Activated CD4-positive, alpha-beta T cell treated with anti-CD3 and anti-CD28 coated beads for 36 hours (primary cell): ENCODE measurements at regions of chr20 and their contacts with region 1.

Region 1: DNA sequence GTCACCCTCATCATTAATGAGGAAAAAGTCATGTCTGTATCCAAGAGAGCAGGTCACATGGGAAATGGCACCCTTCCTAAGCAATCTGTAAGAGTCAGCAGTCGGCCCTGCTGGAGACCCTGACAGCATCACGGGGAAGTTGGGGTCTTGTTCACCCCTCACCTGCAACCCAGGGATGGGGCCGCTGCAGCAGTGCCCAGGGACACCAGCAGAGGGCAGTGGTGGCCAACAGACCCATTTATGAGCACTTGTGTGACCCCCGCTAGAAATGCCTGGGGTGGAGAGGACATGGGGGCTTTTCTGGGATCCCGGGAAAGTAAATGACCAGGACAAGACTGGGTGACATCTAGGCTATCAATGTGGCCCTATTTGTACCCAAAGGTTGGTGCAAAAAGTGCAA is 35.9 kb downstream of the ANKRD60 start:
- DNase-seq: peak; percentile 64
- ATAC-seq: no peak
- H3K4me3 Mint-ChIP-seq: no peak overlapping the region
- H3K27ac Mint-ChIP-seq: no peak overlapping the region
- H3K4me1 Mint-ChIP-seq: no peaks in the 10 kb centered on the region
- H3K27me3 Mint-ChIP-seq: peaks cover 6% of the 10 kb centered on the region

Region 2: DNA sequence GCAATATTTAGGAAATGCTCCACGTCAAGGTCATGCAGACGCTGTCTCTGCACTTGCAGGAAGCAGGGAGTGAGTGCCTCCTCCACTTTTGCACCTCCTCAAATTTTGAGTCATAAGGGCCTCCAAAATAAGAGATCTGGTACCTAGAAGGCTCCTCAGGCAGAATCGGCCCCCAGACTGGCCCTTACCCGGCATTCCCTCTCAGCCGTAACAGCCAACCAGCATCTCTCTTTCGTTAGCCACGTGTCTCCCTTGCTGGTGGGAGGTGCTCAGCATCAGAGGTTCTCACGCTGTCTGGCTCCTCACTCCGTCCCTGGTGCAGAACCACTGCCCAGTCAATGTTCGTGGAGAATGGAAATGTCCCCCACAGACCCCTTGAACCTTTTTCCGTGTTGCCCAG is 39.4 kb before region 1 on chr20:
- CTCF ChIA-PET with region 1: no interaction called
- POLR2A ChIA-PET with region 1: no interaction called
- intact Hi-C with region 1: no loop called
- DNase-seq: no peak
- ATAC-seq: no peak
- H3K4me3 Mint-ChIP-seq: no peak overlapping the region
- H3K27ac Mint-ChIP-seq: no peak overlapping the region
- H3K4me1 Mint-ChIP-seq: no peaks in the 10 kb centered on the region
- H3K27me3 Mint-ChIP-seq: peaks cover 34% of the 10 kb centered on the region

Region 3: DNA sequence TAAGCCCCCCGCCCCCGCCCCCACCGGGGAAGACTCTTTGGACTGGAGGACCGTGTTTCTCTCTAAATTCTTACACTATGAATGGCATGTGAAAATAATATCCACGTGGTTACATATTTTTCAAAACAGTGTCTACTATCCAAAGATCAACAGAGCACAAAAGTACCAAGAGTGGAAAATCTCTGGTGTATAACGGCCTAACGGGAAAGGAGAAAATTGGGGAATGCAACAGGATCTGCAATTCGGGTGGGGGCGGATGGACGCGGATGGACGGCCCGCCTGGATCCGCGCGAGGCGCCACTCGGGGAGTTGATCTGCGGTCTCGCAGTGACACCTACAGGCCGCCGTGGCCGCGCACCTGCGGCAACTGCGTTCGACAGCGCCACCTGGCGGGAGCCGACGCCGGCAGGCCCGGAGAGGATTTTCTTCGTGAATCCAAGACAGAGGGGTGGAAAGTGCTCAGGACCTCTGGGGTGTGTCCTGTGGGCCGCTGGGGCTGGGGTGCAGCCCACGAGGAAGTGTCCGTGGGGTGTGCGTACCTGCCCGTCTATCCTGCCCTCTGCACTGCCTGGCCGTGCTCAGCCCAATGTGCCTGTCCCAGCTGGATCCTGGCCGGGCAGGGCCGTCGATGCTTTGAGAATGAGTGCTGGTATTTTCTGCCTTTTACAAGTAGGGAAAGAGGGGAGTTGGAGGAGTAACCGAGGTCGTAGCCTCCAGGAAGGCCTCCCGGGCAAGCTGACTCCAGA is 17.3 kb after region 1 on chr20:
- CTCF ChIA-PET with region 1: interaction called, 13 read pairs
- POLR2A ChIA-PET with region 1: no interaction called
- intact Hi-C with region 1: loop called in 1 of 2 experiments (anchors 1 kb)
- DNase-seq: peak; percentile 94
- ATAC-seq: peak; percentile 85
- H3K4me3 Mint-ChIP-seq: no peak overlapping the region
- H3K27ac Mint-ChIP-seq: peak overlapping the region; percentile 6
- H3K4me1 Mint-ChIP-seq: no peaks in the 10 kb centered on the region
- H3K27me3 Mint-ChIP-seq: peaks cover 10% of the 10 kb centered on the region

Region 4: GRCh38 chr20:58286729-58287128 is 94.2 kb after region 1 on chr20:
- CTCF ChIA-PET with region 1: no interaction called
- POLR2A ChIA-PET with region 1: no interaction called
- intact Hi-C with region 1: no loop called
- DNase-seq: no peak
- ATAC-seq: peak; percentile 49
- H3K4me3 Mint-ChIP-seq: no peak overlapping the region
- H3K27ac Mint-ChIP-seq: no peak overlapping the region
- H3K4me1 Mint-ChIP-seq: peaks cover 20% of the 10 kb centered on the region
- H3K27me3 Mint-ChIP-seq: no peaks in the 10 kb centered on the region